ENCODE measurements at regions of chr1 and their contacts with region 1.

Region 1: GRCh38 chr1:202274611-202275010 is 67.1 kb downstream of the UBE2T start:
- DNase-seq: no peak
- ATAC-seq: no peak

Region 2: GRCh38 chr1:203769505-203770343 is 1495.1 kb after region 1 on chr1:
- intact Hi-C with region 1: loop called (anchors 10 kb)
- DNase-seq: no peak
- ATAC-seq: peak; percentile 87